ENCODE measurements at regions of chr9 and their contacts with region 1.

Region 1: DNA sequence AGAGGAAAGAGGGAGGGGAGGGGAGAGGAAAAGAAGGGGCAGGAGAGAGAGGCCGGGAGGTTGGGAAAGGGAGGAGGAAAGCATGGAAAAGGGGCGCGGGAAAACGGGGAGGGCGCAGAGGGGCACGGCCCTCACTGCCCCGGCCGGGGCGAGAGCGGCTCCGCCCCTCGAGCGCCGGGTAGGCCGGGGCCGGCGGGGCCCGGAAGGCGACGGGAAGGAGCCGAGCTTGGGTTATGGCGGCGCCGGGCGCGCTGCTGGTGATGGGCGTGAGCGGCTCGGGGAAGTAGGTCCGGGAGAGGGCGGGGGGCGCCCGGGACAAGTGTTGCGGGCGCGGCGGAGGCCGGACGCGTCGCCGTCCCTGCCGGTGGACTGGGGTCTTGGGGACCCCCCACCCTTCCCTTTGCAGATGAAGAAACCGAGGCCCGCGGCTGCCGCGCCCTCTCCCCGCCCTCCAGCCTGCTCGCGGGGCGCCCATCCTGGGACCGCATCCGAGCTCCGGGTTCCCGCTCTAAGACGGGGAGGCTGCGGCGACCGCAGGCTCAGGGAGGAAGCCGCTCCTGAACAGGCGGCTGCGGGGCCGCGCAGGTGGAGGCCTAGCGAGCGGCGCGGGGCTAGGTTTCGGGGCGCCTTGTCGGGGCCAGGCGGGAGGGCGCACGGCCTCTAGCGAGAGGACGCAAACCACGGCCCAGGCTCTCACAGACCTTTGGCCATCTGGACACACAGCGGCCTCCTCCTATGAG is at the start of gene IDNK:
- DNase-seq: peak; percentile 60
- H3K4me3 Mint-ChIP-seq: peak within 1 kb of the TSS; percentile 91
- H3K27ac Mint-ChIP-seq: peak within 1 kb of the TSS; percentile 97
- H3K4me1 Mint-ChIP-seq: peaks cover 44% of the 10 kb centered on the region
- H3K27me3 Mint-ChIP-seq: peaks cover 10% of the 10 kb centered on the region
- total RNA-seq, gene IDNK: 4.5 and 6.3 TPM in 2 replicates

Region 2: GRCh38 chr9:83649080-83649479 is 26.0 kb after region 1 on chr9:
- intact Hi-C with region 1: loop called (anchors 1 kb)
- DNase-seq: peak; percentile 56
- H3K4me3 Mint-ChIP-seq: no peak overlapping the region
- H3K27ac Mint-ChIP-seq: peak overlapping the region; percentile 34
- H3K4me1 Mint-ChIP-seq: no peaks in the 10 kb centered on the region
- H3K27me3 Mint-ChIP-seq: no peaks in the 10 kb centered on the region

Region 3: GRCh38 chr9:83956434-83957247 is 333.5 kb after region 1 on chr9:
- intact Hi-C with region 1: loop called (anchors 1 kb)
- DNase-seq: peak; percentile 64
- H3K4me3 Mint-ChIP-seq: peak overlapping the region; percentile 92
- H3K27ac Mint-ChIP-seq: peak overlapping the region; percentile 94
- H3K4me1 Mint-ChIP-seq: peaks cover 17% of the 10 kb centered on the region
- H3K27me3 Mint-ChIP-seq: no peaks in the 10 kb centered on the region